Ascending aorta (tissue), 2 donors: ENCODE measurements at regions of chr5 and their contacts with region 1.

Region 1: DNA sequence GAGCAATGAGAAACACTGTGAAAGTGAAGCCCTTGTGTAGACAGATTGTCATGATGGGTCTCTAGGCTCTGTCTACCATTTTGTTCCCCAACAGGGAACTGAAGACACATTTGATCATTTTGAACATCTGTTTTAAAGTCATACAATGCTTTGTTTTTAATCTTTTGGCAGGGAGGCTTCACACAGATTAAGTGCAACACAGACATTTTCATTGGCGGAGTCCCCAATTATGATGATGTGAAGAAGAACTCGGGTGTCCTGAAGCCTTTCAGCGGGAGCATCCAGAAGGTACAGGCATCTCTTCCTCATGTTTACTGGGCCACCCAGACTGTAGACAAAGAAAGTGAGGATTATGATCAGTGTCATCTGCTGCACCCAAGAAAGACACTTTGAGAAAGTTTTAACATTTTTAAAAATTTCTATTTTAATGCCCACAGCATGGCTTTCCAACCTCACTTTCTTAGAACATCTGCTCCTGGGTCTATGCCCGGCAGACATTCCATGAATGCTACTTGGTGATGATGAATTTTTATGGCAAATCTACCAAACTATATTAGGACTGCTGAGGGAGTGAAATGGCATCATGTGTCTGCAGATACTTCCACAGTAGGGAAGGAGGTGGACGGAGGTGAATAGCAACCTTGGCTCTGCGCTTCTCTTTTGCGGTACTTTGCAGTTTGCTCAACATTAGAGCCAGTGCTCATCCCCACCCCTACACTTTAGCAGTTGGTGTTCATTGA is 121.3 kb downstream of the LIFR start:
- DNase-seq: no peak
- H3K4me3 ChIP-seq: no peak overlapping the region
- H3K27ac ChIP-seq: peak overlapping the region in 1 of 2 donors; percentile 42
- H3K4me1 ChIP-seq: peaks cover 3 to 7% of the 10 kb centered on the region in 2 donors
- H3K27me3 ChIP-seq: no peaks in the 10 kb centered on the region
- CTCF ChIP-seq: no peak

Region 2: DNA sequence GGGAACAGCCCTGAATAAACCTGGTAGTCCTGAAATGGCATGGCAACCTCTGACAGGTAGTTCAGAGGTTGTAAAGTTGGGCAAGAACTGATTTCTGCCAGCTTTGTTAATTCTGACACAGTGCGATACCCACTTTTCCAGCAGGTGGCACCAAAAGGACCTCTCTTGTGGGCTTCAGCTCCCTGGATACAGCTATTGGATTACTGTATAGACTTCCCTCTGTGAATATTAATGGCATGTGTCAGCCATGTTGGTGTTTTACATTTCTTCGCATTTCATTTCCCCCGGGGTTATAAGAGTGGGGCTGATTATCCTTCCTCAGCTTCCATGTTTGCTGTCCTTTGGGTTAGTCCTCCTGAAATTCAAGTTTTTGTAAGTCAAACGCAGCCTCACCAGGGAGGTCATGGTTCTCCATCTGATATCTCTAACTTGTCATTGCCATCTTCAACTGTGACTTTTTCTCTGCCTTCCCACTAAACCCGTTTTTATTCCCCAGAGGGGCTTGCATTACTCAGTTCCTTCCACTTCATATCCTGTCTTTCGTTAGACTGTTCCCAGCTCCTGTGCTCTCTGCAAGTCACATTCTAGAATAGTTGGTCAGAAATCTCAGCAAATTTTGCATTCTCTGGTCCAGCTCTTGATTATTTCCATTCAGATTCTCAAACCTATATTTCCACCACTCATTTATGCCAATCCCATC is 14.3 kb before region 1 on chr5:
- intact Hi-C with region 1: loop called (anchors 2 kb)
- DNase-seq: peak in 1 of 2 donors; percentile 80
- H3K4me3 ChIP-seq: no peak overlapping the region
- H3K27ac ChIP-seq: peak overlapping the region; percentile 45 to 63
- H3K4me1 ChIP-seq: peaks cover 5 to 7% of the 10 kb centered on the region in 2 donors
- H3K27me3 ChIP-seq: no peaks in the 10 kb centered on the region
- CTCF ChIP-seq: peak; percentile 44 to 72 (median 62)

Region 3: DNA sequence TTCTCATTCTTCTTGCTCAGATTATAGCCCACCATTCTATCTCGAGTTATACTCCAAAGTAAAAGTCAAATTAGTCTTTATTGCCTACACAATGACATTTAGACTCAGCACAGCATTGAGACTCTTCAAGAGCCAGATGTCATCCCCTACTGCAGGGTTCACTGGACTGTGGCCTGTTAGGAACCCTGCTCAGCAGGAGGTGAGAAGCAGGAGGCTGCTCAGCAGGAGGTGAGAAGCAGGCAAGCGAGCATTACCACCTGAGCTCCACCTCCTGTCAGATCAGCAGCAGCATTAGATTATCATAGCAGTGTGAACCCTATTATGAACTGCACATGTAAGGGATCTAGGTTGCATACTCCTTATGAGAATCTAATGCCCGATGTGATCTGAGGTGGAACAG is 134.0 kb after region 1 on chr5:
- intact Hi-C with region 1: no loop called
- DNase-seq: no peak
- H3K4me3 ChIP-seq: no peak overlapping the region
- H3K27ac ChIP-seq: no peak overlapping the region
- H3K4me1 ChIP-seq: no peaks in the 10 kb centered on the region
- H3K27me3 ChIP-seq: no peaks in the 10 kb centered on the region
- CTCF ChIP-seq: no peak